Posterior vena cava (tissue), 2 donors: ENCODE measurements at regions of chr1 and their contacts with region 1.

Region 1: GRCh38 chr1:3133686-3134085 is 64.7 kb downstream of the PRDM16 start:
- DNase-seq: no peak

Region 2: DNA sequence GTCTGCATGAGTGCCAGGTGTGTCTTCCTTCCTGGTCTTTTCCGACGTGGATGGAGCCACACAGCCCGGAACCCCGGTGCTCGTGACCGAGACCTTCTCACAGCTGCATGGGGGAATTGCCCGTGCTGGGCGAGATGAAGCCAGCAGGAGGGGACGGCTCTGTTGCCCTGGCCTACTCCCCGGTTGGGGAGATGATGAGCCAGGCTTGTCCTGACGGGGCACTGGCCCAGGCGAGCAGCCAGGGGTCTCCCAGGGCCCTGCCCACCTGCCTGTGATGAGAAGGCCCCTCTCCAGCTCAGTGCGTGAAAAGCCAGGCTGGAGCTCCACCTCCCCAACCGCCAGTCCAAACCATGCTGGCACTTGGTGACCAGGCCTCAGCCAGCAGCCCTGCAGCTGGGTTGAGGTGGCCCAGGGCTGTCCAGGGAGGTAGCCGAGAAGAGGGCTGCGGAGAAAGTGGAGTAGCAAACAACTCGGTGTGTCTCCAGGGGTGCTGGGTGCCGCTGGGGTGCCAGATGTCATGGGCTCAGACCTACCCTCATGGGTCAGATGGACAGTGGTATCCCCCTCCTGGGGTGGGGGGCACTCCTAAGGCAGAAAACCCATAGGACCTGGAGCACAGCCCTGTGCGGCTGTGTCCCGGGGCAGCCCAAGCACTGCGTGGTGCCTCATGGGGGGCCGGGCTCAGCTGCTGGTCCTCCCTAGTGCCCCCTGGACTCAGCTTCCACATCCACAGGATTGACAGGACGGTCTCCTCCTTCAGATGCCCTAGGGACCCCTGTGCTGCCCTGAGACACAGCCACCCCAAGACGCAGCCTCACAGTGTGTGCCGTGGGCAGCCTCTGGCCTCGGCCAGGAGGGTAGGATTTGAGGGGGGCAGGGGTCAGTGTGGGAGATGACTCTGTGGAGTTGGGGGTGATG is 38.6 kb before region 1 on chr1:
- intact Hi-C with region 1: loop called in 1 of 2 experiments (anchors 1 kb)
- DNase-seq: no peak

Region 3: GRCh38 chr1:3198371-3199271 is 64.9 kb after region 1 on chr1:
- intact Hi-C with region 1: no loop called
- DNase-seq: no peak